Activated CD8-positive, alpha-beta T cell treated with anti-CD3 and anti-CD28 coated beads, Interleukin-2, amount 10 ng/mL, durations not matched to agents 7 days and 5 days (primary cell): ENCODE measurements at regions of chr18 and their contacts with region 1.

Region 1: GRCh38 chr18:76822510-76823160 is at the start of gene ZNF236:
- DNase-seq: peak; percentile 73
- ATAC-seq: peak; percentile 67
- H3K4me3 Mint-ChIP-seq: peak within 1 kb of the TSS; percentile 92
- H3K27ac Mint-ChIP-seq: peak within 1 kb of the TSS; percentile 91
- H3K4me1 Mint-ChIP-seq: peaks cover 49% of the 10 kb centered on the region
- H3K27me3 Mint-ChIP-seq: no peaks in the 10 kb centered on the region
- total RNA-seq, gene ZNF236: 18.2 to 24.3 TPM

Region 2: DNA sequence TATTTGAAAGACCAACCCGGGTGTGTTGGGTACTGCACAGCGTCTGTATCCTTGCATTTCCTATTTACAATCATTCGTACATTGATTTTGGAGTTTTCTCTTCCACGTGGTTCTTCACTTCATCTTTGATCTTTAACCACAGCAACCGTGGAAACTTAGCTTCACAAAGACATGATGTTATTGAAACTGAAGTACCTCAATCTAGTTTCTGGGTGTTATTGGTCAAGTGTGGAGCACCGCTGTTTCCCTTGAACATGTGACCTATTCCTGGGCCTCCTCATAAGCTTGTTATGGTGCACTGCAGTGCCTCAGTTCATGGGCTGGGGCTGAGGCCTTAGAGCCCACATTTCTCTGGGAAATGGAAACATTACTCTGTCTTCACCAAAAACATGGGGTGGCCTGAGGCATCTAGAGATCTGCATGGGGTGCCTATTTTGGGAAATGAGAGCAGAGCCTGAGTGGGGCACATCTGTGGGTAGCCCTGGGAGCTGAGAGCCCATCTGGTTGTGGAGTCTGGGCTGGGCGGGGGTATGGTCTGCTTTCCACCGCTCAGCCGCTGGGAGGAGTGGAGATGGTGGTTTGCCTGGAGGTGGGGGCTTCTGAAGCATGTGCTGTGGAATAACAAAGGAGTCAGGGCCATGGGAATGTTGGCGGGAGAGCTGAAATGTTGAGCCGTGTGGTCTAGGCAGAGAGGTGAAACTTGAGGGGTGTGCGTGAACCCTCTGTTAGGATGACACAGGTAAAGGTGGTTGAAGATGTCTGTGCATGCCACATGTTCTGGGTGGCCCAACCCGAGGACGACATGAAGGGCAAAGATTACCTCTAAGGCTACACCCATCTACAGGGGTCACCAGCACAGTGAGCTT is 37.1 kb after region 1 on chr18:
- CTCF ChIA-PET with region 1: interaction called, 3 read pairs
- POLR2A ChIA-PET with region 1: interaction called, 13 read pairs
- DNase-seq: peak; percentile 48
- ATAC-seq: peak; percentile 86
- H3K4me3 Mint-ChIP-seq: peak overlapping the region; percentile 6
- H3K27ac Mint-ChIP-seq: peak overlapping the region; percentile 57
- H3K4me1 Mint-ChIP-seq: peaks cover 28% of the 10 kb centered on the region
- H3K27me3 Mint-ChIP-seq: no peaks in the 10 kb centered on the region

Region 3: GRCh38 chr18:76875390-76876325 is 53.0 kb after region 1 on chr18:
- CTCF ChIA-PET with region 1: no interaction called
- POLR2A ChIA-PET with region 1: no interaction called
- DNase-seq: peak; percentile 66
- ATAC-seq: peak; percentile 61
- H3K4me3 Mint-ChIP-seq: no peak overlapping the region
- H3K27ac Mint-ChIP-seq: no peak overlapping the region
- H3K4me1 Mint-ChIP-seq: peaks cover 12% of the 10 kb centered on the region
- H3K27me3 Mint-ChIP-seq: no peaks in the 10 kb centered on the region